ENCODE measurements at regions of chr5 and their contacts with region 1.

Region 1: GRCh38 chr5:72307968-72308852 is 11.8 kb downstream of the MRPS27 start:
- DNase-seq: peak; percentile 96
- ATAC-seq: peak; percentile 99
- H3K4me3 Mint-ChIP-seq: peak overlapping the region; percentile 86
- H3K27ac Mint-ChIP-seq: peak overlapping the region; percentile 94
- H3K4me1 Mint-ChIP-seq: peaks cover 31% of the 10 kb centered on the region
- H3K27me3 Mint-ChIP-seq: no peaks in the 10 kb centered on the region
- CTCF ChIP-seq: peak; percentile 65

Region 2: GRCh38 chr5:72138943-72139521 is 169.2 kb before region 1 on chr5:
- CTCF ChIA-PET with region 1: interaction called, 7 read pairs
- POLR2A ChIA-PET with region 1: no interaction called
- intact Hi-C with region 1: loop called (anchors 2 kb)
- DNase-seq: peak; percentile 27
- ATAC-seq: peak; percentile 94
- H3K4me3 Mint-ChIP-seq: no peak overlapping the region
- H3K27ac Mint-ChIP-seq: no peak overlapping the region
- H3K4me1 Mint-ChIP-seq: peaks cover 13% of the 10 kb centered on the region
- H3K27me3 Mint-ChIP-seq: peaks cover 38% of the 10 kb centered on the region
- CTCF ChIP-seq: no peak

Region 3: DNA sequence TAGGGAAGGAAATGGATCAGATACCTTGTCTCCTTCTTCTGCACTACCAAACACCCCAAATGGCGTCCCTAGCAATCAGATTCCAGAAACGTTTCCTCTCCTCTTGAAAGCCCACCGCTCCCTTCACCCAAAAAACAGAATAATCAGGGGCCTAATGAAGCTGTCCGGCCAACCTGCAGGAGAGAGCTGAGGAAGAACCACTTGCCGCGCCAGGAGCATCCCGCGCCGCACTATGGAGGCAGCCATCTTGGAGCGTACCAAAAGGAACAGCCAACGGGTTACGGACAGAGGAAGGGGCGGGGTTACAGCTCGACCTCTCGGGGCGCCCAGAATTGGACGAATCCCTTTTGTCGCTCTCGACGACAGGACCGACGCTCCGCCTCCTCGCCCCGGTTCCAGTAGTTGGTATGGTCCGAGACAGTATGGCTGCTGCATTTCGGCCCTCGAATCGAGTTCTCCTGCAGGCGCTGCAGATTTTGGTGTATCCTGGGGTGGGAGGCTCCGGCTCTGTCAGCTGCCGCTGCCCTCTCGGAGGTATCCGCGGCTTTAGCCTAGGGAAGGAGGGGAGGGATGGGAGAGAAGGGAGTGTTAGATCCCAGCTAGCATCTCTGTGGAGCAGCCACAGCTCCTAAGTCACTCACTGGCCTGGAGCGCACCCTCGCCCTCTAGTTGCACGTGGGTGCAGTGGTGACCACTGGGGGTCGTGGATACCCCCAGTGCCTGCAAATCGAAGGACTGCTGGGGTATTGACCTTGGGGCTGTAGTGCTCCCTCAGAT is 12.0 kb after region 1 on chr5 and contains the starts of genes MRPS27 and PTCD2:
- CTCF ChIA-PET with region 1: interaction called, 48 read pairs
- POLR2A ChIA-PET with region 1: interaction called, 68 read pairs
- intact Hi-C with region 1: no loop called
- DNase-seq: peak; percentile 97
- ATAC-seq: peak; percentile 99
- H3K4me3 Mint-ChIP-seq: peak within 1 kb of the TSS; percentile 91
- H3K27ac Mint-ChIP-seq: peak within 1 kb of the TSS; percentile 90
- H3K4me1 Mint-ChIP-seq: peaks cover 49% of the 10 kb centered on the region
- H3K27me3 Mint-ChIP-seq: no peaks in the 10 kb centered on the region
- CTCF ChIP-seq: no peak
- total RNA-seq, gene MRPS27: 91.5 to 99.1 TPM
- total RNA-seq, gene PTCD2: 10.9 to 11.7 TPM

Region 4: GRCh38 chr5:72584466-72584865 is 276.3 kb after region 1 on chr5:
- CTCF ChIA-PET with region 1: no interaction called
- POLR2A ChIA-PET with region 1: no interaction called
- intact Hi-C with region 1: no loop called
- DNase-seq: no peak
- ATAC-seq: no peak
- H3K4me3 Mint-ChIP-seq: no peak overlapping the region
- H3K27ac Mint-ChIP-seq: no peak overlapping the region
- H3K4me1 Mint-ChIP-seq: no peaks in the 10 kb centered on the region
- H3K27me3 Mint-ChIP-seq: peaks cover 7% of the 10 kb centered on the region
- CTCF ChIP-seq: no peak

Measured in activated CD8-positive, alpha-beta T cell treated with anti-CD3 and anti-CD28 coated beads for 36 hours (primary cell).